Gastrocnemius medialis (tissue), 4 donors: ENCODE measurements at regions of chr9 and their contacts with region 1.

Region 1: GRCh38 chr9:81521892-81522291 is 167.5 kb downstream of the TLE1 start:
- DNase-seq: no peak
- ATAC-seq: no peak
- H3K4me3 ChIP-seq: no peak overlapping the region
- H3K27ac ChIP-seq: no peak overlapping the region
- H3K4me1 ChIP-seq: peaks cover 0 to 8% of the 10 kb centered on the region in 2 donors
- H3K27me3 ChIP-seq: no peaks in the 10 kb centered on the region
- CTCF ChIP-seq: no peak
- POLR2A ChIP-seq: no peak

Region 2: GRCh38 chr9:81592887-81593266 is 71.0 kb after region 1 on chr9:
- in situ Hi-C with region 1: no loop called
- intact Hi-C with region 1: no loop called
- DNase-seq: peak; percentile 30 to 38
- ATAC-seq: peak in 1 of 2 donors; percentile 18
- H3K4me3 ChIP-seq: no peak overlapping the region
- H3K27ac ChIP-seq: peak overlapping the region; percentile 11 to 49 (median 38)
- H3K4me1 ChIP-seq: peaks cover 30 to 31% of the 10 kb centered on the region in 2 donors
- H3K27me3 ChIP-seq: no peaks in the 10 kb centered on the region
- CTCF ChIP-seq: no peak
- POLR2A ChIP-seq: no peak

Region 3: DNA sequence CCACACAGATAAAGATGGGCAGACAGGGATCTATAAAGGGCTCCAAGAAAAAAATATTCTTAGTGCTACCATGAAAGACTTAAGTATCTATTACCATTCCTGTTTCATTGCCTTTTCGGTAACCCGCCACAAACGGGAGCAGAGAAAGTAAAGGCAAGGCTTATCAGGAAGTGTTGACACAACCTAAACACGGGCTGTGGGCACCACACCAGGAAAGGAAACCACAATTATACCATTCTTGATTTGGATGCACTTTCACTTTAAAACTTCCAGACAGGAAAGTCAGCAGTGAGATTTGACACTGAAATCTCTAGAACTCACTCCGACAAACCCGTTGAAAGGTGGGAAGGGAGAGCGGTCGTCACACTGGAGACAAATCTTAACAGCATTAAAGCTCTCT is 160.9 kb after region 1 on chr9:
- in situ Hi-C with region 1: loop called in 3 of 4 experiments (anchors 5 kb)
- intact Hi-C with region 1: loop called (anchors 1 kb)
- DNase-seq: no peak
- ATAC-seq: no peak
- H3K4me3 ChIP-seq: peak overlapping the region; percentile 3 to 91 (median 20)
- H3K27ac ChIP-seq: peak overlapping the region in 3 of 4 donors; percentile 14 to 61 (median 52)
- H3K4me1 ChIP-seq: peaks cover 75 to 83% of the 10 kb centered on the region in 2 donors
- H3K27me3 ChIP-seq: no peaks in the 10 kb centered on the region
- CTCF ChIP-seq: no peak
- POLR2A ChIP-seq: no peak

Region 4: DNA sequence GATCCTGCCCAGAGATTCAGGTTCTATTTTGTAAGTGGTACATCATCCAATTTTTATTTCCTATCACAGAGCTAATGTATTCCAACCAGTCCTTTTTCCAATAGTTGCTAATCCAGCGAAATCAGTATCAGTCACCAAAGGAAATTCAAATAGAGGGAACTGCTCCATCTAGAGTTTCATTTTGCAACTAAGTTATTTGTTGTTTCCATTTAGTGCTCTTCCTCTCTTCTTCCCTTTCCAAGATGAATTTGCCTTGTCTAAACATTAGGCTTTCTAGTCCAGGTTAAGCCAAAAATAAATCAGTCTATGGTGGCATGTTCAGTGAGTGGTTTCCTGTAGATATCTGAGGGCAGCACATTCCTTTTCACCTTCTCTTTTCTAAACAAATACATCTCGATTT is 326.6 kb after region 1 on chr9:
- in situ Hi-C with region 1: loop called in 2 of 4 experiments (anchors 25 kb)
- intact Hi-C with region 1: loop called (anchors 5 kb)
- DNase-seq: no peak
- ATAC-seq: no peak
- H3K4me3 ChIP-seq: no peak overlapping the region
- H3K27ac ChIP-seq: no peak overlapping the region
- H3K4me1 ChIP-seq: peaks cover 12 to 22% of the 10 kb centered on the region in 2 donors
- H3K27me3 ChIP-seq: no peaks in the 10 kb centered on the region
- CTCF ChIP-seq: peak in 2 of 5 experiments; percentile 31 to 42
- POLR2A ChIP-seq: no peak

Region 5: DNA sequence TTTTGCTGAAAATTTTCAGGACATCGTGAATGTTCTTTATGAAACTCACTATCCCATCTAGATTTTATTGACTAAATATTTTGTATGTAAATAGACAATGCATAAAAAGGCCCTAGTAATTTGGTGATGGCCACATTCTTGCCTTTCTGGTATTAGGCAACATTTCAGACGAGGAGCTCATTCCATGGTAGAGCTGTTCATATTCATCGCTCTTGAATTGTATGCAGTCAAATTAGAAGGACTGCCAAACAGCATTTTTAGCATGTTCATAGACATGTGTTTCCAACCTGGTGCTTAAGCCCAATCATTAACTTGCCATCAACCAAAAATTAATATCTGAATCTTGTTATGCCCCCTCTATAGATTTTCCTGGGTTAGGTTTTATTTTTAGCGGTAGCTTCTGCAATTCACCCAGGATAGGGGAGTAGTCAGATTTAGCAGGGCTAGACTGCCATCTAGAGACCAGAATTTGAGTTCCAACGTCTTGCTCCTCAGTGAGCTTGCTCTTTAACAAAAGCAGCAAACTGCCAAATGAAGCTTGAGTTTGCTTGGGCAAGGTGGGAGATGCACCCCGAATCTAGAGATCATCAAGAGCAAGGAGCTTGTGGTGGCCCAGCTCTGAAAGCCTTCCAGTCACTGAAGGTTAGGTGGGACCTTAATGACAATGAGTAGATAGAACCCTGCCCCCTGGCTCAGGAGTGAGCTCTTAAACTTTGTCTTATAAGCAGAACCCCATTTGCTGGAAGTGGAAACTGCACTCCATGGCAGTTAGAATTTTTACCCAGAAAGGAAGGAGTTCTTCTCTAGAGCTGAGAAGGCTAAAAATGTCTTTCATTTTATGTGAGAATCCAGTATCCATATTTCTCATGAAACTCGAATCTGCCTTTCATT is 1084.8 kb after region 1 on chr9:
- in situ Hi-C with region 1: loop called in 2 of 4 experiments (anchors 10 to 25 kb)
- intact Hi-C with region 1: loop called (anchors 5 kb)
- DNase-seq: peak in 1 of 2 donors; percentile 16
- ATAC-seq: peak; percentile 78 to 90
- H3K4me3 ChIP-seq: no peak overlapping the region
- H3K27ac ChIP-seq: no peak overlapping the region
- H3K4me1 ChIP-seq: peaks cover 0 to 11% of the 10 kb centered on the region in 2 donors
- H3K27me3 ChIP-seq: no peaks in the 10 kb centered on the region
- CTCF ChIP-seq: peak; percentile 22 to 72 (median 63)
- POLR2A ChIP-seq: no peak